ENCODE measurements at regions of chr5 and their contacts with region 1.

Region 1: GRCh38 chr5:113548396-113548795 is 34.9 kb downstream of the YTHDC2 start:
- DNase-seq: no peak
- ATAC-seq: no peak
- H3K4me3 ChIP-seq: no peak overlapping the region
- H3K27ac ChIP-seq: no peak overlapping the region
- H3K4me1 ChIP-seq: peaks cover 7% of the 10 kb centered on the region
- H3K27me3 ChIP-seq: no peaks in the 10 kb centered on the region
- CTCF ChIP-seq: no peak

Region 2: GRCh38 chr5:113250341-113250953 is 297.9 kb before region 1 on chr5:
- CTCF ChIA-PET with region 1: no interaction called
- POLR2A ChIA-PET with region 1: no interaction called
- intact Hi-C with region 1: no loop called
- DNase-seq: no peak
- ATAC-seq: no peak
- H3K4me3 ChIP-seq: no peak overlapping the region
- H3K27ac ChIP-seq: no peak overlapping the region
- H3K4me1 ChIP-seq: no peaks in the 10 kb centered on the region
- H3K27me3 ChIP-seq: peaks cover 3% of the 10 kb centered on the region; the same call in 1 of the 2 replicates
- CTCF ChIP-seq: no peak

Region 3: GRCh38 chr5:113531481-113532159 is 16.8 kb before region 1 on chr5:
- CTCF ChIA-PET with region 1: no interaction called
- POLR2A ChIA-PET with region 1: interaction called, 20 read pairs
- intact Hi-C with region 1: no loop called
- DNase-seq: no peak
- ATAC-seq: no peak
- H3K4me3 ChIP-seq: no peak overlapping the region
- H3K27ac ChIP-seq: no peak overlapping the region
- H3K4me1 ChIP-seq: no peaks in the 10 kb centered on the region
- H3K27me3 ChIP-seq: no peaks in the 10 kb centered on the region
- CTCF ChIP-seq: no peak

Region 4: DNA sequence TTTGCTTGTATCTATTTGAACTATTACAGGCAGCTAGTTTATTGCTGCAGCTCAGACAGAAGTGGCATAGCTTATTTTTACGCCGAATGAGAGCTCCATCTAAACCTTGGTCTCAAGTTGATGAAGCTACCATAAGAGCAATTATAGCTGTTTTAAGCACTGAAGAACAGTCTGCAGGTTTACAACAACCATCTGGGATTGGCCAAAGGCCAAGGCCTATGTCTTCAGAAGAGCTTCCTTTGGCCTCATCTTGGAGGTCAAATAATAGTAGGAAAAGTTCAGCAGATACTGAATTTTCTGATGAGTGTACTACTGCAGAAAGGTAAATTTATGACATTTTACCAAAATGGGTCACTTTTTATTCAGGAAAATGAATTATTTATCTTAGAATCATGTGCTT is 33.0 kb after region 1 on chr5:
- CTCF ChIA-PET with region 1: no interaction called
- POLR2A ChIA-PET with region 1: no interaction called
- intact Hi-C with region 1: no loop called
- DNase-seq: no peak
- ATAC-seq: no peak
- H3K4me3 ChIP-seq: no peak overlapping the region
- H3K27ac ChIP-seq: no peak overlapping the region
- H3K4me1 ChIP-seq: no peaks in the 10 kb centered on the region
- H3K27me3 ChIP-seq: no peaks in the 10 kb centered on the region
- CTCF ChIP-seq: no peak